Ovary (tissue), 10 donors: ENCODE measurements at regions of chr6 and their contacts with region 1.

Region 1: DNA sequence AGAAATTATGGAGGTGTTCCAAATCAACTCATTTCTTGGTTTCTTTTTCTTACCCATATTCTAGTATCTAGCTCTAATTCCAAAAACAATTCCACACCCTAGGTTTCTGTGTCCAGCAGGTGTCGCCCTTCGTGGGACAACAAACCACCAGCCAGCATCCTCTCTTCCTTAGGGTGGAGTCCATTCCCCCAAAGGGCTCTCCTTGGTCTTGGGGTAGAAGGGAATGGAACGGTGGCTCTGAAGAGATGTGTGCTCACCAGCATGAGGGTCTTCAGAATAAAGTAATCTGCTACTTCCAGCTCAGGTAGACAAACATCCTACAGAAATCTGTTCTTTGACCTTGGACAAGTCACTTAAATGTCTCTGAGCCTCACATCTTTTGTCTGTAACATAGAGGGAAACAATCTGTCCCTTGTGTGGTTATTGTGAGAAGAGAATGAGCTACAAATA is 7.2 kb downstream of the HLA-DMB start:
- DNase-seq: peak; percentile 66 to 83 (median 80)
- H3K4me3 ChIP-seq: no peak overlapping the region
- H3K27ac ChIP-seq: no peak overlapping the region
- H3K4me1 ChIP-seq: no peaks in the 10 kb centered on the region
- H3K27me3 ChIP-seq: no peaks in the 10 kb centered on the region
- CTCF ChIP-seq: peak; percentile 38 to 70 (median 63)
- EP300 ChIP-seq: no peak
- POLR2A ChIP-seq: no peak

Region 2: DNA sequence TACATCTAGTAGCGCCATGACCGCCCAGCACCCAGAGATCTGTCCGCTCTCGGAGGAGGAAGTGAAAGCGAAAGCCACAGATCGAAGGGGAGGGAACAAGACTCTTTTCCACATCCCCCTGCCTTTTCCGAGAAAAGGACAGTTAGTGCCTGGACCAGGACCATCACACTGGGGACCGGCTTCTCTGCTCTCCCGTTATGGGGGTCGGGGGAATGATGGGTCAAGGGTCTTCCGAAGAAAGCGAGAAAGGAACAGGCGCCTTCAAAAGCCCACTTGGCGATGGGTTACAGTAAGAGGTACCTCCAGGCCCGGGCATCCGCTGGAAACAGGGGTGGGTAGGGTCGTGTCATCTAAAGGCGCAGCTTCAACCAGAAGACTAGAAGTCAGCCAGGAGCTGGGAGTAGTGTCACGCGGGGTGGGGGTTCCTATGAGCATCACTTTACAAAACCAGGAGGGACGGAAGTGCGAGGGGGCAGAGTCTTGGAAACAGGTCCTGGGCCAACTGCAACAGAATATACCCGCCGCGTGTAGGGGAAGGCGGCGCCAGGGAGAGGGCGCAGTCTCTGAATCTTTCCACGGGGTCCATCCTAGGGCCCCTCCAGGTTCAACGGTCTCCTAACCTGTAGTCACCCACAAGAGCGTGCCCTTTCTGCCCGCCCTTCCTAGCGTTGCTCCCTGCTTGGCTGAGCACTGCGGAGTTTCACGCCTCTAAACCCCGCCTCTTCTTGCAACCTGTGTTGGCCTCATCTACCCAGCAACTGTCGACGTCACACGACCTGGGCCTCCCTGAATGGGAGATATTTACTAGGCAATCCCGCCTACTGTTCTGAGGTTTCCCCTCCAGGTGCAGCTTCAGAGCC is 89.5 kb before region 1 on chr6 and contains the start of gene PSMB8:
- intact Hi-C with region 1: no loop called
- DNase-seq: peak; percentile 94 to 98 (median 96)
- H3K4me3 ChIP-seq: peak within 1 kb of the TSS; percentile 73
- H3K27ac ChIP-seq: peak within 1 kb of the TSS; percentile 91 to 92
- H3K4me1 ChIP-seq: peaks cover 5% of the 10 kb centered on the region
- H3K27me3 ChIP-seq: no peaks in the 10 kb centered on the region
- CTCF ChIP-seq: peak; percentile 19 to 39 (median 39)
- EP300 ChIP-seq: no peak
- POLR2A ChIP-seq: peak; percentile 91
- total RNA-seq, gene PSMB8: 28.9 to 44.8 (median 36.0) TPM

Region 3: DNA sequence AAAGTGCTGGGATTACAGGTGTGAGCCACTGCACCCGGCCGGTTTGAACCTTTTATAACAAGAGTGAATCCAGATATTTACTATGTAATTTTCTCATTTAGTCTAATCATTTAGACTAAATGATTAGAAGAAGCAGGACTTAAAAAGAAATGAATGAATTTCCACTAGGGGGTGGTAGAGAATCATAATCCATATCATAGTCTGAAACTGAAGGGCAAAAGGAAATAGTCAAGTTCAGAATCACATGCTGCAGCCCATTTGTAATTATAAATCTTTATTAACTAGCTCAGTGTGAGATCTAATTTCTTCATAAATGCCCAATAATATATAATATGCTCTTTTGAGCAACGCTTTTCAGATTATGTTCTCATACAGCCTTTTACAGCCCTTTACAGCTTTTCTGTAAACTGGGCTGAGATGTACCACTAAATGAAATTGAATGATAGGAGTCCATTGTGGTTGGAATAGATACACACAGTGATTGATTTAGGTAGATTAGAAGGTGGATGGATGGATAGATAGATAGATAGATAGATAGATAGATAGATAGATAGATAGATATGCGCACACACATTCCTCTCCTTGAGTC is 47.9 kb before region 1 on chr6:
- intact Hi-C with region 1: loop called in 2 of 4 experiments (anchors 5 to 10 kb)
- DNase-seq: no peak
- H3K4me3 ChIP-seq: no peak overlapping the region
- H3K27ac ChIP-seq: no peak overlapping the region
- H3K4me1 ChIP-seq: peaks cover 6% of the 10 kb centered on the region
- H3K27me3 ChIP-seq: no peaks in the 10 kb centered on the region
- CTCF ChIP-seq: peak; percentile 29 to 72 (median 63)
- EP300 ChIP-seq: no peak
- POLR2A ChIP-seq: no peak